Activated B cell treated with CpG ODN at 0.5 μM for 24 hours (primary cell): ENCODE measurements at regions of chr19 and their contacts with region 1.

Region 1: DNA sequence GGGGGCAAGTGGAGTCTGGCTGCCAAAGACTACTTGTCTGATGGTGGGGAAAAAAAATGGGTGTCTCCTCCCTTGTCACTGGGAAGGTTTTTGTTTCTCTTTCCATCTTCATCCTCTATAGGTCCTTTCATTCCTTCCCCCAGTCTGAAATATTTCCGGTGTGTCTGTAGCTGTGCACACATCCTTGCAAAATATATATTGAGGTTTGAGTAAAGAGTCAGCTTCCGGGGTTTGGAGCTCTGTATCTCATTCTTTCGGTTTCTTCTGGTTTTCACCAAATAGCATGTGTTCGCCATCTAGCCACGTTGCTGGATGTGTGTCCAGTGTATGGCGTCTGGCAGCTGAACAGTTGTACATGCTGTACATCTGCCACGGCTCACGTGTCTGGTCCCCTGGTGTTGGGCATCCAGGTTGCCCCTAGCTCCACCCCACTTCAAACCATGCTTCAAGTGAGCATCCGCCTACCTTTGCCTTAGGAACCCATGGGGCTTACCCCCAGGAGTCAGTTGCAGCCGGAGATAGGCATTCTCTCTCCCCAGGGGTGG is 142.2 kb downstream of the SIPA1L3 start:
- DNase-seq: peak; percentile 55
- ATAC-seq: peak; percentile 37
- H3K4me3 Mint-ChIP-seq: peak overlapping the region; percentile 79
- H3K27ac Mint-ChIP-seq: peak overlapping the region; percentile 99
- H3K4me1 Mint-ChIP-seq: peaks cover 75% of the 10 kb centered on the region
- H3K27me3 Mint-ChIP-seq: no peaks in the 10 kb centered on the region
- CTCF ChIP-seq: no peak

Region 2: GRCh38 chr19:37926711-37927110 is 122.5 kb before region 1 on chr19:
- CTCF ChIA-PET with region 1: interaction called, 8 read pairs
- POLR2A ChIA-PET with region 1: interaction called, 40 read pairs
- intact Hi-C with region 1: loop called (anchors 1 kb)
- DNase-seq: no peak
- ATAC-seq: peak; percentile 9
- H3K4me3 Mint-ChIP-seq: peak overlapping the region; percentile 60
- H3K27ac Mint-ChIP-seq: peak overlapping the region; percentile 97
- H3K4me1 Mint-ChIP-seq: peaks cover 89% of the 10 kb centered on the region
- H3K27me3 Mint-ChIP-seq: no peaks in the 10 kb centered on the region
- CTCF ChIP-seq: no peak

Region 3: DNA sequence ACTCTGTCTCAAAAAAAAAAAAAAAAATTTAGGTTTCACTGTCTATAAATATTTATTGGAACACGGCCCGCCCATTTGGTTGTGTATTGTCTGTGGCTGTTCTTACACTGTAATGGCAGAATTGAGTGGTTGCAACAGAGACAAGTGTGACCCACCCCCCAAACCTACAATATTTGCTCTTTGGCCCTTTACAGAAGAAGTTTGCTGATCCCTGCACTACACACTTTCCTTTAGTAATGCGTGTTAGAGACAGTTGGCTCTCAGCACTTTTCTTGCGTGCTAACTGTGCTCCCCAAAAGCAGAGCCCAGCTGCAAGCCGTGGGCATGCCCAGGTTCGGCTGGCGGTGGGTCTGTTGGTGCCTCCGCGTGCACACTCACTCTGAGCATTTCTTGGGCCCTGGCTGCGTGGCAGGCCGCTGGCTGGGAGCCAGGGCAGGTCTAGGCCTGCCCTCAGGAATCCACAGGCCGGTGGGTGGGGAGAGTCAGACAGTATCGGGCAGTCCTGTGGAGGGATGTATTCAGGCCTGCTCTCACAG is 69.6 kb before region 1 on chr19:
- CTCF ChIA-PET with region 1: interaction called, 5 read pairs
- POLR2A ChIA-PET with region 1: interaction called, 106 read pairs
- intact Hi-C with region 1: loop called (anchors 1 kb)
- DNase-seq: no peak
- ATAC-seq: peak; percentile 3
- H3K4me3 Mint-ChIP-seq: peak overlapping the region; percentile 60
- H3K27ac Mint-ChIP-seq: peak overlapping the region; percentile 90
- H3K4me1 Mint-ChIP-seq: peaks cover 95% of the 10 kb centered on the region
- H3K27me3 Mint-ChIP-seq: no peaks in the 10 kb centered on the region
- CTCF ChIP-seq: no peak

Region 4: GRCh38 chr19:38004521-38005223 is 44.5 kb before region 1 on chr19:
- CTCF ChIA-PET with region 1: interaction called, 6 read pairs
- POLR2A ChIA-PET with region 1: interaction called, 66 read pairs
- intact Hi-C with region 1: loop called (anchors 1 kb)
- DNase-seq: peak; percentile 34
- ATAC-seq: peak; percentile 60
- H3K4me3 Mint-ChIP-seq: no peak overlapping the region
- H3K27ac Mint-ChIP-seq: no peak overlapping the region
- H3K4me1 Mint-ChIP-seq: peaks cover 39% of the 10 kb centered on the region
- H3K27me3 Mint-ChIP-seq: no peaks in the 10 kb centered on the region
- CTCF ChIP-seq: no peak

Region 5: DNA sequence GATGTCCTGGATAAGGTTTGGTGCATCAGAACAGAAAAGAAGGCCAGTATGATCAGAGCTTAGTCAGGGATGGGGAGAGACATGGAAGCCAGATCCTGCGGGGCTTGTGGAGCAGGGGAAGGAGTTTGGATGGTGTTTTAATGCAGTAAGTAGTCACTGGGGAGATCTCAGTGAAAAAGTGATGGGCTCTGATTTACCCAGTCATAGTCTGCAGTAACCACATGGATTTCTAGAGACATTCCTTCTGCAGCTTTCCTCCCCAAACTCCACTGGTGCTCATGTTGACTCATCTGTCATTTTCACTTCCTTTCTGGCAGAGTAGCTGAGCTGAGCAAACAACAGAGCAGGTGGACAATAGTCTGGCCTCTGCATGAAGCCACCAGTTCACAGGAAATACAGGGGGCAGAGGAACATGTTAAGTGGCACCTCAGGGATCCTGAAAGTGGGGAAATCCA is 30.8 kb after region 1 on chr19:
- CTCF ChIA-PET with region 1: no interaction called
- POLR2A ChIA-PET with region 1: interaction called, 30 read pairs
- intact Hi-C with region 1: loop called (anchors 1 kb)
- DNase-seq: no peak
- ATAC-seq: peak; percentile 83
- H3K4me3 Mint-ChIP-seq: peak overlapping the region; percentile 28
- H3K27ac Mint-ChIP-seq: peak overlapping the region; percentile 87
- H3K4me1 Mint-ChIP-seq: peaks cover 22% of the 10 kb centered on the region
- H3K27me3 Mint-ChIP-seq: no peaks in the 10 kb centered on the region
- CTCF ChIP-seq: no peak